HEK293 (cell line): ENCODE measurements at regions of chr12 and their contacts with region 1.

Region 1: DNA sequence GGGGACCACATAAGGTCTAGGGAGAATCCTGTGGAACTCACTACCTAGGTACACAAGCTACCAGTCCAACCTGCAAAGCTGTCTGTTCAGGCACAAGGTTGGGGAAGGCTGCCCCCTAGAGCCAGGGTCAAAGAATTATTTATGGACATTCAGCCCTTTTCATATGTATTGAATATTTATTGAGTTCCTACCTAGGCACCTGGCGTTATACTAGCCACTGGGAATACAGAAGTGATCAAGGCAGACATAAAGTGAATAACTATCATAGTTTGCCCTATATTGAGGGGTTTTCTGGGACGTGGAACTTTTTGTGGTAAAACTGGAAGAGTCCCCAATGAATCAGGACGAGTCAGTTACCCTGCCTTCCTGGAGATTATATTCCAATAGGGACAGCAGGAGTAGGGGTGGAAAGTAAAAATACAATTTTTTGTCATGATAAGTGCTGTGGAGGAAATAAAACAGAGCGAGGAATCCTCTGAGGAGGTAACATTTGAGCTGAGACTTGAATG is 5.8 kb upstream of the SLC48A1 start:
- H3K4me3 ChIP-seq: no peak overlapping the region
- H3K27ac ChIP-seq: no peak overlapping the region
- H3K4me1 ChIP-seq: no peaks in the 10 kb centered on the region; the same call in 1 of the 2 replicates
- CTCF ChIP-seq: 0 out of 2 replicates have a peak, but pooled peaks have one; percentile 18

Region 2: GRCh38 chr12:47725893-47726292 is 41.4 kb before region 1 on chr12:
- CTCF ChIA-PET with region 1: interaction called, 15 read pairs
- POLR2A ChIA-PET with region 1: no interaction called
- H3K4me3 ChIP-seq: no peak overlapping the region
- H3K27ac ChIP-seq: no peak overlapping the region
- H3K4me1 ChIP-seq: no peaks in the 10 kb centered on the region
- CTCF ChIP-seq: no peak

Region 3: DNA sequence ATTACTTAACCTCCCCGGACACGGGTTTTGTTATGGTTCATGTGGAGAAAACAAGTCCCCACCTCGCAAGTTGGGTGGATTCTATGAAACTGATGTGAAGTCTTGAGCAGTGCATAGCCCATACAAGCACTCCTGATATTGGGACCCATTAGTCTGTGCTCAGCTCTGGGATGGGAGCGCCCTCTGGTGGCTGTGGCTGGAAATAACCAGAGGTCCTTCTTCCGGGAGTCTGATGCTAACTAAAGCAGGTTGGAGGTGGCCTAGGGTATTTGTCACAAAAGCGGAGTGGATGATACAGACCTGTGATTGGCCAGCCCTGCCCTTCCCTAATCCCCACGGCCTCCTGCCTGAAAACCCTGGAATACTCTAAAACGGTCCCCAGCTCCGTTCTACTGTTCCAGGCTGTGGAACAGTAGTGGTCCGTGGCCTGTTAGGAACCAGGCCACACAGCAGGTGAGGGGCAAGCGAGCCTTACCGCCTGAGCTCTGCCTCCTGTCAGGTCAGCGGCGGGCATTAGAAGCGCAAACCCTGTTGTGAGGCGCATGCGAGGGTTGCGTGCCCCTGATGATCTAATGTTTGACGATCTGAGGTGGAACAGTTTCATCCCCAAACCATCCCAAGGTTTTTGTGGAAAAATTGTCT is 12.2 kb after region 1 on chr12:
- CTCF ChIA-PET with region 1: interaction called, 102 read pairs
- POLR2A ChIA-PET with region 1: interaction called, 6 read pairs
- H3K4me3 ChIP-seq: no peak overlapping the region
- H3K27ac ChIP-seq: no peak overlapping the region
- H3K4me1 ChIP-seq: no peaks in the 10 kb centered on the region; the same call in 1 of the 2 replicates
- CTCF ChIP-seq: peak; percentile 90